Heart right ventricle (tissue), 16 donors: ENCODE measurements at regions of chr6 and their contacts with region 1.

Region 1: GRCh38 chr6:139291813-139292619 is at the start of gene TXLNB:
- DNase-seq: peak; percentile 82 to 83
- ATAC-seq: peak; percentile 72 to 88 (median 84)
- H3K4me3 ChIP-seq: peak within 1 kb of the TSS in 9 of 10 donors; percentile 21 to 57 (median 44)
- H3K27ac ChIP-seq: peak within 1 kb of the TSS; percentile 81 to 94 (median 90)
- H3K4me1 ChIP-seq: peaks cover 4 to 68% (median 39%) of the 10 kb centered on the region in 9 donors
- H3K27me3 ChIP-seq: no peaks in the 10 kb centered on the region
- CTCF ChIP-seq: peak in 1 of 9 donors; percentile 8
- total RNA-seq, gene TXLNB: 93.3 to 156 (median 140) TPM

Region 2: GRCh38 chr6:139240161-139241010 is 51.6 kb before region 1 on chr6:
- intact Hi-C with region 1: no loop called
- DNase-seq: no peak
- ATAC-seq: peak in 1 of 8 donors; percentile 27
- H3K4me3 ChIP-seq: no peak overlapping the region
- H3K27ac ChIP-seq: peak overlapping the region in 6 of 10 donors; percentile 6 to 47 (median 21)
- H3K4me1 ChIP-seq: peaks cover 0 to 24% (median 9%) of the 10 kb centered on the region in 9 donors
- H3K27me3 ChIP-seq: no peaks in the 10 kb centered on the region
- CTCF ChIP-seq: no peak

Region 3: DNA sequence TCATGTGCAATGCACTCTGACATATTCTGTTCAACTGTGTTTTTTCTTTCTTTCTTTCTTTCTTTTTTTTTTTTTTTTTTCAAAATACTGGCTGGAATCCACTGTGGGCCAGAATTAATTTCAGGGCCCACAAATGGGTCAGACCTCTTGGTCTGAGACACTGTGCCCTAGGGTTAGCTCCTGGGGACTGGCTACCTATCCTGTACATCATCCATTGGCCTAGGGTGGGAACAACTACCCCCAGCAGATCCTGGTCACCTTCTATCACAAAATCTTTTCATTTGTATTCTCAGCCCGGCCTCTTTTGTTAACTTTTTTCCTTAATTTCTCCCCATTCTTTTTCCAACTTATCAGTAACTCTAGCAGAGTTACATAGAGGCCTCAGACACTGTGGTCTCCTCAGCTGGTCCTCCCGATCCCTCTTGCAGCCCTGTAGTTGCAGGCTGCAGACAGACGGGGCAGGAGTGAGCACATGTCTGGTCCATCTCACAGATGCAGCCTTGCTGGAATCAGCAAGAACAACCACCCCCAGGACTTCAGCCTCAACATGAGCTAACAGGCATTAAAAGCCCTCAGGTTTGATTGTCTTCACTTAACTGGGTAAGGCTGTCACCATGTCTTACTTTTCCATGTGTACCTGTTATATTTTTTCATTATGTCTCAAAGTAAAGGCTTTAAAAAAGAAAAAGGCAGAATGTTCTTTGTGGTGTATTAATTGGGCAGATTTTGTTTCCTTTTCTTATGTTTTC is 41.5 kb before region 1 on chr6:
- intact Hi-C with region 1: loop called in 2 of 10 experiments (anchors 5 kb)
- DNase-seq: peak; percentile 61 to 63
- ATAC-seq: peak; percentile 69 to 94 (median 88)
- H3K4me3 ChIP-seq: no peak overlapping the region
- H3K27ac ChIP-seq: peak overlapping the region; percentile 47 to 89 (median 80)
- H3K4me1 ChIP-seq: peaks cover 10 to 37% (median 25%) of the 10 kb centered on the region in 9 donors
- H3K27me3 ChIP-seq: no peaks in the 10 kb centered on the region
- CTCF ChIP-seq: peak; percentile 48 to 84 (median 72)

Region 4: DNA sequence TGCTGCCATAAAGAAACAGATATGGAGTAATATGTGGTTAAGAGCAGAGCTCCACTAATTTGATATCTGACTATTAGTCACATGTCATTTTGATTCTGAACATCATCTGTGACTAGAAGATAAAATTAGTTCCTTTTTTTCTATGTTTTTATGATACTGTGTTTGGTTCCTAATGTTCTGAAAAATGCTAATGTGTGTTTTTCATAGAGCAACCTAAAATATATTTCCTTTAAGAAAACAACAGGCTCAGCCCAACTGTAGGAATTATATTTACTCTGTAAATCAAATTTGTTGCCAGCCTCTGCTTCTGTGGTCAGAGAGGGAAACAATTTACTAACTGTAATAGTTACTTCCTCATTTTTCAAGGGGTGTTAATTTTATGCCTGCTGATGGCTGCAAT is 33.1 kb after region 1 on chr6:
- intact Hi-C with region 1: loop called in 1 of 10 experiments (anchors 5 kb)
- DNase-seq: no peak
- ATAC-seq: peak in 2 of 8 donors; percentile 8 to 15
- H3K4me3 ChIP-seq: no peak overlapping the region
- H3K27ac ChIP-seq: peak overlapping the region in 6 of 10 donors; percentile 63 to 85 (median 74)
- H3K4me1 ChIP-seq: peaks cover 0 to 49% (median 4%) of the 10 kb centered on the region in 9 donors
- H3K27me3 ChIP-seq: no peaks in the 10 kb centered on the region
- CTCF ChIP-seq: no peak

Region 5: DNA sequence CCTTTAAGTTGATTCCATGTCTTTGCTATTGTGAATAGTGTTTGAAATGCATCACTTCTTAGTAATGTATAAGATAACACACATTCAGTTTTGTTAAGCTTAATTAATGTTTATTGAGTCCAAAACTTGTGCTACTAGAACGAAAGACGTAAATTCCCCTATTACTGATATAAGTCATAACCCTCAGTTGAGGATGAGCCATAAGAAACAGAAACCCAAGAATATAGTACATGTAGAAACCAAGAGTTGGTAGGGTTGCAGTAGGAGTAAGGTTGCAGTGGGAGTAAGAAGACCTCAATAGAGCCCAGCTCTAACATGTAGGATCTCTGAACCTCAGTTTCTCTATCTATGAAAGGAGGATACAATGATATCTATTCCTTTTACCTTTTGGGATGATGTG is 63.2 kb after region 1 on chr6:
- intact Hi-C with region 1: loop called in 1 of 10 experiments (anchors 10 kb)
- DNase-seq: no peak
- ATAC-seq: no peak
- H3K4me3 ChIP-seq: no peak overlapping the region
- H3K27ac ChIP-seq: no peak overlapping the region
- H3K4me1 ChIP-seq: peaks cover 0 to 10% (median 7%) of the 10 kb centered on the region in 9 donors
- H3K27me3 ChIP-seq: no peaks in the 10 kb centered on the region
- CTCF ChIP-seq: no peak

Region 6: GRCh38 chr6:139533573-139534471 is 241.8 kb after region 1 on chr6:
- intact Hi-C with region 1: no loop called
- DNase-seq: no peak
- ATAC-seq: peak in 4 of 8 donors; percentile 56 to 71 (median 58)
- H3K4me3 ChIP-seq: peak overlapping the region in 1 of 10 donors; percentile 10
- H3K27ac ChIP-seq: peak overlapping the region in 1 of 10 donors; percentile 49
- H3K4me1 ChIP-seq: peaks cover 0 to 43% (median 8%) of the 10 kb centered on the region in 9 donors
- H3K27me3 ChIP-seq: no peaks in the 10 kb centered on the region
- CTCF ChIP-seq: no peak